Naive thymus-derived CD4-positive, alpha-beta T cell (primary cell): ENCODE measurements at regions of chr12 and their contacts with region 1.

Region 1: DNA sequence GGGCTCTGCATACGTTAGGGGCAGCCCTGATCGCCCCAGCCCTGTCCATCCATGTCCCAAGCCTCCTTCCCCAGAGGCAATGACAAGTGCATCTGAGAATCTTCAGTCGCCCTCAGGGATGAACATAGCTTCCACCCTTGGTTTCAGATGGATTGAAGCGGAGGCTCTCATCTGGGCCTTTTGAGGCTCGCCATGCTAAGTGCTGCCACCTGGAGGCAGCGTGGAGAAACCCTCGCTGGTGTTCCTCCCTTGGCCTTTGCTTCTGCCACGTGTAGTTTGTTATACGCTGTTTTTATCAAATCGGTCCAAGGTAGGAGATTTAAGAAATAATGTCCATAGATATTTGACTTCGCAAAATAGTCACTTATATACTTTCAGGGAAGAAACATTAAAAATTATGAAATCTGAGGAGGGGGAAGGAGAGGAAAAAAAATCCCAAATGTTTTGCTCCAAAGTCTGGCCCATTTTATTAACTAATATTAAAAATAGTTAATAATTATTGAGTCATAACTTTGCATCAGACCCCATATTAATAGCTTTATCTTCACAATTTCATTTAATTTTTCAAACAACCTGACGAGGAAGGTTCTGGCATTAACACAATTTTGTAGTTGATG is 28.8 kb upstream of the LRRC10 start:
- DNase-seq: peak; percentile 10 to 56 (median 47)
- ATAC-seq: peak; percentile 77
- H3K4me3 ChIP-seq: no peak overlapping the region
- H3K4me3 Mint-ChIP-seq: no peak overlapping the region
- H3K27ac ChIP-seq: no peak overlapping the region
- H3K27ac Mint-ChIP-seq: no peak overlapping the region
- H3K4me1 ChIP-seq: no peaks in the 10 kb centered on the region
- H3K4me1 Mint-ChIP-seq: no peaks in the 10 kb centered on the region
- H3K27me3 ChIP-seq: no peaks in the 10 kb centered on the region
- H3K27me3 Mint-ChIP-seq: peaks cover 0 to 4% (median 0%) of the 10 kb centered on the region in 5 donors

Region 2: DNA sequence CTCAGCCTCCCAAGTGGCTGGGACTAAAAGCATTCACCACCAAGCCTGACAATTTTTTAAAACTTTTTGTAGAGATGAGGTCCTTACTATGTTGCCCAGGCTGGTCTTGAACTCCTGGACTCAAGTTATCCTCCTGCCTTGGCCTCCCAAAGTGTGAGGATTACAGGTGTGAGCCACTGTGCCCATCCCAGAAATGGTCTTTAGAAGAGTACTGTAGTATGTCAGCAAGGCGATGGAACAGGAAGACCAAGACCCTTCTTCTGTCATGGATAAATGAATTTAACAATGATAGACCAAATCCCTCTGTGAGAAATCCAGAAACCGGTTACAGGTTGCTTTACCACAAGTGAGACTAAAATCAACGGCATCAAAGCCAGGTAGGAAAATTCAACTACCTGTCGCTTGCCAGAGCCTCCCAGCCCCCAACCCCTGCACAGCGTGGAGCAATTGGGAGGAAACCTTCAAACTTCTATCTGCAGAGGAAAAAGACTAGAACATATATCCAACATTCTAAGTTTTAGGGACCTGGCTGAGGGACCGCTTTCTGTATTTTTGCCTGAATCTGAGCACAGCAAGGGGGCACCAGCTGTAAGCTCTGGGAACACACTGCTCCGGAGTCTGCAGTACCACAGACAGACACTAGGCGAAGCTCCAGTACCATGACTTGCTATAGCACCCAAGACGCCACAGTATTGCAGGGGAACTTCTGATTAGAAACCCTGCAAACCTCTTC is 348.8 kb before region 1 on chr12:
- CTCF ChIA-PET with region 1: interaction called, 9 read pairs
- POLR2A ChIA-PET with region 1: no interaction called
- intact Hi-C with region 1: loop called (anchors 1 kb)
- DNase-seq: peak; percentile 57 to 82 (median 75)
- ATAC-seq: peak; percentile 100
- H3K4me3 ChIP-seq: no peak overlapping the region
- H3K4me3 Mint-ChIP-seq: peak overlapping the region in 2 of 10 donors; percentile 14 to 37
- H3K27ac ChIP-seq: no peak overlapping the region
- H3K27ac Mint-ChIP-seq: peak overlapping the region in 1 of 9 donors; percentile 59
- H3K4me1 ChIP-seq: peaks cover 8% of the 10 kb centered on the region in 2 donors
- H3K4me1 Mint-ChIP-seq: peaks cover 6 to 36% (median 22%) of the 10 kb centered on the region in 7 donors
- H3K27me3 ChIP-seq: no peaks in the 10 kb centered on the region
- H3K27me3 Mint-ChIP-seq: peaks cover 0 to 49% (median 18%) of the 10 kb centered on the region in 5 donors